ENCODE measurements at regions of chr13 and their contacts with region 1.

Region 1: DNA sequence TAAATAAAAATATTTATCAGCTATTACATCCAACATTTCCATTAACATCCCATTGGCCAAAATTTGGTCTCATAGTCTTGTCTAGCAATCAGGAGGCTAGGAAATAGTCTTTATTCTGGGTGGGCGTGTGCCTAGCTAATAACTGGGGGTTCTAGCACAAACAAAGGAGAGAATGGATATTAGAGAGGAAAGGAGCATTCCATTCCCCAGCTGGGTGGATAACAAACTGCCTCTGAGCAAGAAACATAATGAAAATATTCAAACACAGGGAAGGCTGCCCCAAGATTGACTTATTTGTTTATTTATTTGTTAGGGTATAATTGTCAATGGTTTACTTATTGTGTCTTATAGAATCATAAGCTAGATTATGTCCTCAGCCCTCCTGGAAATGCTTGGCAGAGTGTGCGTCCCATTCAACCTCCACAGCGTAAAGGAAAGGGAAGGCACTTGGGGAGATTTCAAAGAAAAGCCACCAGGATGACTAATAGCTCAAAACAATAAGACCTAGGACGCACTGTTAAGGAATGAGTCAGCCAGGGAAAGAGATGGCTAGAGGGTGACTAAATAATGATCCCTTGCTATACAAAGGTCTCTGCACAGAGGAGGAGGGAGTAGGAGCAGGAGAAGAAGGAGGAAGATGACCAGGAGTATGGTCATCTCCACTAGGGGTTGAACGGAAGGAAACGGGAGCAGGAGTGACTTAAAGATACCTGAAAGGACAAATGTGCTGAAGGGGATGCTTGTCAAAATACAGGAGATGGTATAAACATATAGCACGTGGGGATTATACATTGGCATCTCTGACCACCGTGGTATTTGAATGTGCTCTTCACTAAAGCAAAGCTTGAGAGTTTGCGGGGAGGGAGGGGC is 23.5 kb upstream of the USP12 start:
- DNase-seq: no peak
- H3K4me3 ChIP-seq: no peak overlapping the region
- H3K27ac ChIP-seq: peak overlapping the region in 1 of 4 donors; percentile 30
- H3K4me1 ChIP-seq: peaks cover 0 to 8% (median 4%) of the 10 kb centered on the region in 4 donors
- H3K27me3 ChIP-seq: no peaks in the 10 kb centered on the region
- CTCF ChIP-seq: no peak
- EP300 ChIP-seq: no peak
- POLR2A ChIP-seq: no peak

Region 2: DNA sequence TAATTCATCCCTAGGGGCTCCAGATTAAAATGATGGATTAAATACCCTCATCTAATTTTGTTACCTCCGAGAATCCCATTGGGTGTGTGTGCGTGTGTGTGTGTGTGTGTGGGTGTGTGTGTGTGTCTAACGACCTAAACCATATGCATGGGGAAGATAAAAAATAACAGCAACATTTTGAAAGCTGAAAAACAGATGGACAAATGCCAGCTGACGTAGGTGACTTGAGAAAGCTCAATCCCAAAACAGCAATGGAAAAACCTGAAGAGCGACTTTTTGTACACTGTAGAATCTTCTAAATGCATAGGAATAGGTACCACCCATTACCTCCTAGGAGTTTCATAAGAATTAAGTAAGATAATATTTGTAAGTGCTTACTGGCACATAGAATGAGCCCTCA is 47.6 kb after region 1 on chr13:
- intact Hi-C with region 1: loop called (anchors 5 kb)
- DNase-seq: no peak
- H3K4me3 ChIP-seq: no peak overlapping the region
- H3K27ac ChIP-seq: no peak overlapping the region
- H3K4me1 ChIP-seq: no peaks in the 10 kb centered on the region
- H3K27me3 ChIP-seq: no peaks in the 10 kb centered on the region
- CTCF ChIP-seq: no peak
- EP300 ChIP-seq: no peak
- POLR2A ChIP-seq: no peak

Measured in sigmoid colon (tissue), 7 donors.